ENCODE measurements at regions of chr2 and their contacts with region 1.

Region 1: GRCh38 chr2:157596992-157597681 is 31.5 kb downstream of the ACVR1C start:
- DNase-seq: peak in 9 of 10 donors; percentile 10 to 90 (median 46)

Region 2: DNA sequence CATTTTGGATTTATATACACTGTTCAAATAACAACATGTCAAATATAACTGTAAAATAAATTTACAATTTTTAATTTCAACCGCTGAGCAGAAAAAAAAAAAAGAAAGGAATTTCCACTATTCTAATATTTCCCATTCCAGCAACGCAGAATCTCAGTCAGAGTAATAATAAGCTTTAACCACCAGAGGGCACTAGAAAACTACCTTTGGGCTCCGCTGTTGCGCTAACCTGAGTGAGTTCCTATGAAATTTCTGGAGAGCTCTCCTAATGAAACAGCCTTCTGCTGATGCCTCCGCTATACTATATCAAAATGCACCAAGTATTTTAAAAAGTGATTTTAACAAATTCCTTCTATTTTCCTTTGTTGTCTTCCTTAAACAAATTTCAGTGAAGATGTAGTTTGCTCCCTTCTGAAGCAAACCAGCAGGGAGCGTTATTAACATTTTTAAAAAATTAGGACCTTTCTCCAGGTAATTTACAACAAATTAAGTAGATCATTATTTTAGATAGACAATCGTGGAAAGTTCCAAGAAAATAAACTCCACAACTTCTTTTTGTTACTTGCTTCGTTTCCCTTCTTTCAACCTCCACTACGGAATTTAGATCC is 294.5 kb before region 1 on chr2:
- intact Hi-C with region 1: loop called (anchors 5 kb)
- DNase-seq: peak in 2 of 10 donors; percentile 21 to 25

Region 3: GRCh38 chr2:157497638-157498314 is 99.4 kb before region 1 on chr2:
- intact Hi-C with region 1: loop called (anchors 5 kb)
- DNase-seq: no peak

Region 4: GRCh38 chr2:157509744-157510143 is 87.4 kb before region 1 on chr2:
- intact Hi-C with region 1: loop called (anchors 5 kb)
- DNase-seq: no peak

Region 5: DNA sequence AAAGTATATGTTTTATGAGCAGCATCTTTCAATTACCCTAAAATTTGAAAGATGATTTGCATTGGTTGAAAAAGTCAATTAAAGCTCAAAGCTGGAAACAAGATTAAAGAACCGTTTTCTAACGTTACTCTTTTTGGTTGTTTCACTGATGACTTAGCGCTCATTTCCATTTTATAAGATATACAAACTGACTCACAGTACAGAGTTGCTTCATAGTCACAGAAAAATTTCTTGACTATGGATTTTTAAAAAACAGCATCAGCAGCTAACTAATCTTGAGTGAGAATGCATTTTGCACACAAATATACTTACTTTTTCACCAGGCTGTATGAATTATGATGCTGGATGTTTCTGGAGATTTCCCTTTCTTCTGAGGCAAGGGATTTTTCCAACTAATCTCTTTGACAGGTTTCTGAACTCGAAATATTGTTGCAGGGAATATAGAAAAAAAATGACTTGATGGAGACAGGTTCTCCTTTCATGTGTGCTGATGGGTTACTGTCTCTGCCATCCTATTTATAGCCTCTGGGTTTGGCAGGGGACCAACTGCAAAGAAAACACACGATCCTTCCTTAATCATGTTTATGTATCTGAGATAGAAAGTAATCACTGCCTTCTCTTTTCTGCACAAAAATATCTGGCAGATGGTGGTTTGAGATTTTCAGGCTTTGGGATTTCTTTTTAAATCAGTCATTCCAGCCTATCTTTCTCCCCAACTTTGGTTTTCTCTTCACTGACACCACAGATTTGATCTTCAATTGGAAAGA is 1068.6 kb after region 1 on chr2:
- intact Hi-C with region 1: no loop called
- DNase-seq: no peak

Measured in posterior cingulate gyrus (tissue), 11 donors.